Posterior vena cava (tissue), 2 donors: ENCODE measurements at regions of chr1 and their contacts with region 1.

Region 1: DNA sequence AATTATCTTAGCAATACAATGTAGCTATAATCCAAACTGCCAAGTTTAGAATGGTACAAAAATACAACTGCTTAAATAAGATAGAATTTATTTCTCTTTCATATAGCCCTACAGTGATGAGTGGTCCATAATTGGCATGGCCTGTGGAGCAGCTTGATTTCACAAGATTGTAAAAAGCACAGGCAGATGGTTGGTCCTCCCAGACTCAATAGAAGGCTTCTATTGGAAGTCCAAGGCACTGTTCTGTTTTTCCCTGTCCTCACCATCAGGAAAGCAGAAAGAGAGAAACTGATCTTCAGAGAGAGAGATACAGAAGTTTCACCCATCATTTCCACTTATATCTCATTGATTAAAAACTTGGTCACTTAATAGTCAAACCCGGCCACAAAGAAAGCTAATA is 1.8 kb upstream of the OR6P1 start:
- DNase-seq: no peak

Region 2: GRCh38 chr1:158509471-158510156 is 62.6 kb before region 1 on chr1:
- intact Hi-C with region 1: loop called in 1 of 2 experiments (anchors 5 kb)
- DNase-seq: no peak

Region 3: GRCh38 chr1:158607296-158607695 is 35.1 kb after region 1 on chr1:
- intact Hi-C with region 1: no loop called
- DNase-seq: no peak

Region 4: GRCh38 chr1:159040206-159040605 is 468.0 kb after region 1 on chr1:
- intact Hi-C with region 1: no loop called
- DNase-seq: no peak